Sigmoid colon (tissue), 7 donors: ENCODE measurements at regions of chr12 and their contacts with region 1.

Region 1: GRCh38 chr12:46661110-46661845 is 164.5 kb downstream of the SLC38A4 start:
- DNase-seq: no peak
- H3K4me3 ChIP-seq: peak overlapping the region in 1 of 4 donors; percentile 26
- H3K27ac ChIP-seq: peak overlapping the region; percentile 68 to 81 (median 74)
- H3K4me1 ChIP-seq: peaks cover 0 to 39% (median 34%) of the 10 kb centered on the region in 4 donors
- H3K27me3 ChIP-seq: no peaks in the 10 kb centered on the region
- CTCF ChIP-seq: peak; percentile 83 to 91 (median 86)
- EP300 ChIP-seq: no peak
- POLR2A ChIP-seq: no peak

Region 2: DNA sequence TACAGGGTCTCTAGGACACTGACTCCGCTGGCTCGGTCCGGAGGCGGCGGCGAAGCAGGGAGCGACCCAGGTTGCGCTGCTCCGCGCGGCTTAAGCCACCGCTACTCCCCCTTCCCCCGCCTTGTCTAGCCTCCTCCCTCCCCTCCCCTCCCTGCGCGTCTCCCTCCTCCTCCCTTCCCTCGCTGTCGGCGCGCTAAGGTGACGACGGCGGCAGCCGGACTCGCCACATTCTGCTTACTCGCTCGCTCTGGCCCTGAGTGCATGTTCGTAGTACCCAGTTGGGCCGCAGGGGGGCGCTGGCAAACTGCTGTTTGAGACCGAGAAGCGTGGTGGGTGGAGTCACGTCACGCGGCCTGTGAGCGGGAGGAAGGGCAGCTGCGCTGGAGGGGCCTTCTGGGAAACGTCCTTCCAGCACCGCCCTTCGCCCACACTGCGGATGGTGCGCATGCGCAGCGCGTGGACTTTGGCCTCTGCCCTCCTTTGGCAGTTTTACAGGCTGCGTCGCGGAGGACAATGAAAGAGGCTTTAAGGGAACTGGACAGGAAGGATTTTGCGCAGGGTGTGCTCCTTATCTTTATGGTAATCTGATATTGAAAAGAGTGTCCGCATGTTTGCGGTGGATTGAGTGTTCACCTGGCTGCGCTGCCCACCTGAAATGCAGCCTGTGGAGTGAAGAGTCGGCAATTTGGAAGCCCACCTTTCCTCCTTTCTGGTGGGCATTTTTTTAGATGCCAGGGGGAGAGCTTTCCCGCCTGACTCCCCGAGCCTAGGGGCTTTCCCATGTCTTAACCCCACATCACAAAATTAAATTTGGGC is 670.6 kb before region 1 on chr12 and contains the start of gene SCAF11:
- intact Hi-C with region 1: loop called (anchors 5 kb)
- DNase-seq: peak; percentile 100
- H3K4me3 ChIP-seq: peak within 1 kb of the TSS; percentile 71 to 92 (median 82)
- H3K27ac ChIP-seq: peak within 1 kb of the TSS; percentile 96 to 99 (median 98)
- H3K4me1 ChIP-seq: peaks cover 0 to 45% (median 36%) of the 10 kb centered on the region in 4 donors
- H3K27me3 ChIP-seq: no peaks in the 10 kb centered on the region
- CTCF ChIP-seq: peak; percentile 89 to 99 (median 96)
- EP300 ChIP-seq: peak in 2 of 4 donors; percentile 22 to 80
- POLR2A ChIP-seq: peak; percentile 90 to 95
- total RNA-seq, gene SCAF11: 116 to 165 (median 127) TPM

Region 3: DNA sequence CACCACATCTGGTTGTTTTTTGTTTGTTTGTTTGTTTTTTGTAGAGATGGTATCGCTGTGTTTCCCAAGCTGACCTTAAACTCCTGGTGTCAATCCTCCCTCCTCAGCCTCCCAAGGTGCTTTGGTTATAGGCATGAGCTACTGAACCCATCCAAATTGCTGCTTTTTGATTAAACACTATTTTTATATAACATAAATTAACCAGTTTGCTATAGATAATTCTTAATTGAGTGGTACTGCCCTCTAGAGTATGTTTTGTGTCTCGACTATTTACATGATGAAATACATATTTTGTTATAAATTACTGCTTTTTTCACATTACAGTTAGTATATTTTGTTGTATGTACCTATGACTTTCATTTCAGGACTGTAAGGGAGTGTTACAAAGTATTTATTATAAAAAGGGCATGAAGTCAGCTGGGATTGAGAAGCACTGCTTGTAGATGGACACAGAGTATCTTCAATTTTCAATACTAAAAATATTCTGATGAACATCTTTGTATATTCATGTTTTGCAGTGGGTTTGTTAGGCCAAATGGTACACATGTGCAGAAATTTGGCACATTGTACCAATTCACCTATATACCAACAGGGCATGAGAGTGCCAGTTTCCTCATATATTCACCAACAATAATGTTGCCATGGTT is 656.0 kb before region 1 on chr12:
- intact Hi-C with region 1: no loop called
- DNase-seq: no peak
- H3K4me3 ChIP-seq: no peak overlapping the region
- H3K27ac ChIP-seq: no peak overlapping the region
- H3K4me1 ChIP-seq: no peaks in the 10 kb centered on the region
- H3K27me3 ChIP-seq: no peaks in the 10 kb centered on the region
- CTCF ChIP-seq: no peak
- EP300 ChIP-seq: no peak
- POLR2A ChIP-seq: no peak

Region 4: DNA sequence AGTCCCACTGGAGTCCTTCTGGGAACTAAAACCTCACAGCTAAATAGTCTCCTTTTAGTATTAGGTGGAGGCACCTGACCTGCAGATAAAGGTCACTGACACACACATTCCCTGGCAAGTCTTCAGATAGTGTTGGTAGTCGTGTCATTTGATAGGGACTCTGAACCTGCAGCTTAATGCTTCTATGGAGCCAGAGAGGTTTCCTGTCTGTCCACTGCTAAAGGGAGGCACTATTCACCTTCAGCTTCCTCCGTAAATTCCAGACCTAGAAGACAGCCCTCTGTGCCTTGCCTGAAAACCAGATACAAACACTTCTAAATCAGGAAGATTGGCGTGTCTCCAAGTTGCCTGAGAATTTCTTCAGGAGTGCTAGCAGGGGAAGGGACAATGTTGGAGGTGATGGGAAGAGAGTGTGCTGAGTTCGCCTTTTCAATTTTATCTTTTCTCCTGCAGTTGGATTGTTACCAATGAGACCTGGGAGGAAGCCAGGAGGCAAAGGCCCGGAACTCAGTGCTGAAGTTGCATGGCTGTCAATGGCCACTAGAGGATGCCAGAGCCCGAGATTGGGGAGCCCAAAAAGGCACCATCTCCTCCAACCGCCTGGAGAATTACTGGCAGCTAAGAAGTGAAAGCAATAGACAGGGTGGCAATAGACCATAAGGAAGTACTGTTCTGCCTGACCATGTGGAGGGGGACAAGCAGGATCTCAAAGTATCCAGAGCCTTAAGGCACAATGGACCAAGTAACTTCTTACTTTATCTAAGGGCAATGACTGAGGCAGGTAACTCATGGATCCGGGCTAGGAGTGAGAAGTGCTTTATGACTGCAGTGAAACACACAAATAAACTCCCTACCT is 589.3 kb before region 1 on chr12:
- intact Hi-C with region 1: loop called (anchors 5 kb)
- DNase-seq: peak; percentile 82
- H3K4me3 ChIP-seq: no peak overlapping the region
- H3K27ac ChIP-seq: peak overlapping the region in 3 of 4 donors; percentile 19 to 45 (median 41)
- H3K4me1 ChIP-seq: peaks cover 0 to 12% (median 10%) of the 10 kb centered on the region in 4 donors
- H3K27me3 ChIP-seq: no peaks in the 10 kb centered on the region
- CTCF ChIP-seq: peak; percentile 92 to 98 (median 94)
- EP300 ChIP-seq: no peak
- POLR2A ChIP-seq: no peak

Region 5: DNA sequence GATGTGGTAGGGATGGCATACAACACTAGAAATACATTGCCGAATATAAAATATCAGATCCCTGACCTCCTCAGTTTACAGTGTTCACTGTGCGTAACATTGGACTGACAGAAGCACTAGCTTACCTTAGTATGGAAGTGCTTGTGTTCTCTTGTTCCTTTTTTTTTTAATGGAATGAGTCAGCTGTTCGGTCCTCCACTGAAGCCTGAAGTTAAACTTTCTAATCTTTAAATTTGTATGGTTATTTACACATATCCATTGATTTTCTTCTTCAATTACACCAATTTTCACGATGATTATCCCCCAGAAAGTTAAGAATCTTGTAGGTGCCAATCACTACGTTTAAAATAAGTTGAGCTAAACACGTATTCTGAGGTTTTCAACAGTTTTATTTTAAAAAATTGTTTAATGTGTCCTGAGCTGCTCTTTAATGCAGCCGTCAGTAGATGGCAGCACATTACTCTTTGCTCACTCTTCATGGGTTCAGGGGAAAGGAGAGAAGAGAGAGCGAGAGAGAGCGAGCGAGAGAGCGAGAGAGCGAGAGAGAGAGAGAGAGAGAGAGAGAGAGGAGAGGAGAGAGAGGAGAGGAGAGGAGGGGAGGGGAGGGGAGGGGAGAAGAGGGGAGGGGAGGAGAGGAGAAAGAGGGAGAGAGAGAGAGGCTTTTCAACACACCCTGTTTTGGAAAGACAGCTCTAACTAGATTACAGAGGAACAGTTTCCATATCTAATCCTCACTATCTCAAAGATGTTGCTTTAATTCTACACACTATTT is 536.2 kb before region 1 on chr12:
- intact Hi-C with region 1: loop called (anchors 5 kb)
- DNase-seq: peak; percentile 75
- H3K4me3 ChIP-seq: peak overlapping the region in 3 of 4 donors; percentile 24 to 34 (median 31)
- H3K27ac ChIP-seq: peak overlapping the region; percentile 8 to 54 (median 44)
- H3K4me1 ChIP-seq: peaks cover 0 to 22% (median 20%) of the 10 kb centered on the region in 4 donors
- H3K27me3 ChIP-seq: no peaks in the 10 kb centered on the region
- CTCF ChIP-seq: peak; percentile 61 to 86 (median 75)
- EP300 ChIP-seq: no peak
- POLR2A ChIP-seq: no peak

Region 6: GRCh38 chr12:46153268-46153872 is 507.9 kb before region 1 on chr12:
- intact Hi-C with region 1: loop called (anchors 10 kb)
- DNase-seq: no peak
- H3K4me3 ChIP-seq: no peak overlapping the region
- H3K27ac ChIP-seq: peak overlapping the region in 3 of 4 donors; percentile 23 to 62 (median 58)
- H3K4me1 ChIP-seq: peaks cover 0 to 41% (median 32%) of the 10 kb centered on the region in 4 donors
- H3K27me3 ChIP-seq: no peaks in the 10 kb centered on the region
- CTCF ChIP-seq: peak in 3 of 4 experiments; percentile 31 to 70 (median 32)
- EP300 ChIP-seq: no peak
- POLR2A ChIP-seq: no peak

Region 7: DNA sequence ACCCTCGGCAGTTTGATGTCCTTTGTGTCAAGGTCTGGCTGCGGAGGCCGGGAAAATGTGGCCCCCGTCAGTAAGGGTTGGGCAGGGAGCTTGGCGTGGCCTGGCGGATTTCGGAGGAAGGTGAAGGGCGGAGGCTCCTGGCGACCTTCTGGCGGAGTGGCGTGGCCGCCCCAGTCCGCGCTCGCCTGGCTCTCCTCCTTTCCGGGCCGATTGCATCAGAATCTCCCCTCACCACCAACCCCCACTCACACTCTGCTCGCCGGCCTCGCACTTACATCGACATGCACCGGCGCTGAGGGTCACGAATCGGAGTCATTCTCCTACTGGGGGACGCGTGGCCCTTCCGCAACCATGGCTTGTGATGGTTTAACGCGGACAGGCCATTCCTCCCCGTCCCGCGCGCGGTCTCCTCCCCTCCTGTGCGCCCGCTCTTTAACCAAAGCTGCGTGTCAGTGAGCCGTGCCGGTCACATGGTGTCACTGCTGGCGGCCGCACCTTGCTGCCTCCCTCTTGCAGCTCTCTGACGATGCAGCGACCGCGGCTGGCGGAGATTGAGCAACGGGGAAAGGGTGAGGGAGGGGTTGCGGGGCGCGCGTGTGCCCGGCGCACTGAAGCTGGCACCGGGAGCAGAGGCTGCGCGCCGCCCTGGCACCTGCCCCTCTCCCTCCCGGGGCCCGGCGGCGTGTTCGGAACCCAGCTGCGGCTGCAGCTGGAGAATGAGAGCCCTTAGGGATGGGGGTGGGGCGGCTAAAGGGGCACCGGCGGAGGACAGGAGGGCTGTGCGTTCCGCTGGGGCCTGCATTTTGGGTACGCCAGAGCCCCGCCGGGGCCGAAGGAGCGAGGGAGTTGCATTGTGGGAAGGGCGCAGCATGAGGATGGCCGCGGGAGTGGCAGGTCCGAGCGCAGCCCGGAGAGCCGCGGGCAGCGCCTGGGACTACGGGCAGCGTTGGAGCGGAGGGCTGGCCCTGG is 392.4 kb before region 1 on chr12 and contains the start of gene SLC38A1:
- intact Hi-C with region 1: loop called (anchors 10 kb)
- DNase-seq: peak; percentile 97
- H3K4me3 ChIP-seq: peak within 1 kb of the TSS; percentile 64 to 80 (median 74)
- H3K27ac ChIP-seq: peak within 1 kb of the TSS; percentile 89 to 93 (median 92)
- H3K4me1 ChIP-seq: peaks cover 0 to 40% (median 31%) of the 10 kb centered on the region in 4 donors
- H3K27me3 ChIP-seq: no peaks in the 10 kb centered on the region
- CTCF ChIP-seq: no peak
- EP300 ChIP-seq: peak in 1 of 4 donors; percentile 36
- POLR2A ChIP-seq: peak; percentile 80 to 87
- total RNA-seq, gene SLC38A1: 149 to 209 (median 177) TPM

Region 8: DNA sequence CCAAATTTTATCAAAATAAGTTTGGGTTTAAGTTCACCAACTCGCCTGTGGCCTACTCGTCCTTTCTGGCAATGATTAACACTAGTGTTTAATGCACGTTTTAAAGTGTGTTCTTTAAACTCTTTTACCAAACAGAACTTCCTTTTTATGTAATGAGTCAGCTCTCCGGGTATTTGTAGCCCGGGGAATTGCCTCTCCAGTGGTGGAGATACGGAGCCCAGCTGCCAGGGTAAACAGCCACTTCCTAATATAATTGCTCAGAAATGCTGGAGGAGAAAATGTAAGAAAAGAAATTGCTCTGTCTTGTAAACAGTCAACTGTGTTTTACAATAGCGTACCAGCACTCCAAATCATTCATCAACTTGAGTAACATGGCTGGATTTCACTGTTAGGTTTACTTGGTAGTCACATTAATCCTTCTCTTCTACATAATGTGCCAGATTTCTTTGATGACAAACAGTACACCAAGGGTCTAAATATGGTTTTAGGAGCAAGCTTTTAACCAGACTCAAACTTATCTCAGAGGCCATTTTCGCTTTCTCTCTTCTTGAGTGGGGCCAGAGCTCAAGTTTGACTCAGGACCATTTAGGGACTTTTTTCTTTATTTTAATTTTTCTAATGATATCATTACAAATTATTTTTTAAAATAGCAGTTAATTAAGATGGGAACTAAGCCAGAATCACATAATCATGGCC is 187.5 kb before region 1 on chr12:
- intact Hi-C with region 1: loop called (anchors 10 kb)
- DNase-seq: peak; percentile 81
- H3K4me3 ChIP-seq: no peak overlapping the region
- H3K27ac ChIP-seq: peak overlapping the region; percentile 68 to 88 (median 73)
- H3K4me1 ChIP-seq: peaks cover 0 to 43% (median 31%) of the 10 kb centered on the region in 4 donors
- H3K27me3 ChIP-seq: no peaks in the 10 kb centered on the region
- CTCF ChIP-seq: no peak
- EP300 ChIP-seq: peak in 3 of 4 donors; percentile 22 to 44 (median 28)
- POLR2A ChIP-seq: no peak

Region 9: GRCh38 chr12:46617167-46617566 is 44.1 kb before region 1 on chr12:
- intact Hi-C with region 1: no loop called
- DNase-seq: peak; percentile 78
- H3K4me3 ChIP-seq: no peak overlapping the region
- H3K27ac ChIP-seq: peak overlapping the region; percentile 36 to 69 (median 62)
- H3K4me1 ChIP-seq: peaks cover 0 to 16% (median 3%) of the 10 kb centered on the region in 4 donors
- H3K27me3 ChIP-seq: no peaks in the 10 kb centered on the region
- CTCF ChIP-seq: no peak
- EP300 ChIP-seq: peak in 2 of 4 donors; percentile 82 to 86
- POLR2A ChIP-seq: no peak